ENCODE measurements at regions of chr19 and their contacts with region 1.

Region 1: DNA sequence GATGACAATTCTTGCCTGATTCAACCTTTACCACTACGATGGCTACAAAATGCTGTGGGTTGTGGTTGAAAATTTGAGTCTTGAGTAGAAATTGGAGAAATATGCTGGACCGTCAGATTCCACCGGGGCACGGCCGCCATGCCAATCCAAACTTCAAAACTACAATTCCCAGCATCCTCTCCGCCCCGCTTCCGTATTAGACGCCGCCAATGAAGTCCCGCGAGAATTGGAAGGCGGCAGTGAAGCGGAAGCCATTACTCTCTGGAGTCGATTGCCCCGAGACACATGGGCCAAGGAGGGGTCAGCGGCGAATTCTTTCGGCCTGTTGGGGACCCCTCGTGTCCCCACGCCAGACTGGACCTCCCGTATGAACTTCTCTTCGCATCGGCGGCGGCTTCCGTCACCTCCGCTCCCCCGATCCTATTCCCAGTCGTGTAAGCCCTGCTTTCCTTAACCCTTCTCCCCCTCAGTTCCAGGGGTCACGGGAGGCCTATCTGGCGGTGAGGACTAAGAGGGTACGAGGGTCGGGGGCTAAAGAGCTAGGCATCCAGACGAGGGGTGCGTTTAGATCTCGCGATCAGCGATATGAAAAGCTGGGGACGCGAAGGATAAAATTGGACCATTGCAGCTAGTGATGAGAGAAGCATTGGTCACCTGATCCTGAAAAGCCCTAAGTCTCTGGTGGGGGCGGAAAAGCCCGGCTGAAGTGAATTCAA is at the start of gene ZNF317:
- DNase-seq: peak; percentile 95
- H3K4me3 Mint-ChIP-seq: peak within 1 kb of the TSS; percentile 98
- H3K27ac Mint-ChIP-seq: peak within 1 kb of the TSS; percentile 96
- H3K4me1 Mint-ChIP-seq: peaks cover 36% of the 10 kb centered on the region
- H3K27me3 Mint-ChIP-seq: no peaks in the 10 kb centered on the region
- total RNA-seq, gene ZNF317: 38.9 to 39.7 TPM

Region 2: GRCh38 chr19:8832132-8833021 is 307.9 kb before region 1 on chr19 and contains the starts of genes MBD3L1 and ZNF558:
- CTCF ChIA-PET with region 1: no interaction called
- intact Hi-C with region 1: loop called (anchors 5 kb)
- DNase-seq: peak; percentile 100
- H3K4me3 Mint-ChIP-seq: peak within 1 kb of the TSS; percentile 82
- H3K27ac Mint-ChIP-seq: peak within 1 kb of the TSS; percentile 86
- H3K4me1 Mint-ChIP-seq: peaks cover 19% of the 10 kb centered on the region
- H3K27me3 Mint-ChIP-seq: no peaks in the 10 kb centered on the region
- total RNA-seq, gene MBD3L1: not detected
- total RNA-seq, gene ZNF558: 23.9 to 24.4 TPM

Region 3: GRCh38 chr19:9171393-9171991 is 31.2 kb after region 1 on chr19:
- CTCF ChIA-PET with region 1: no interaction called
- intact Hi-C with region 1: no loop called
- DNase-seq: no peak
- H3K4me3 Mint-ChIP-seq: no peak overlapping the region
- H3K27ac Mint-ChIP-seq: no peak overlapping the region
- H3K4me1 Mint-ChIP-seq: no peaks in the 10 kb centered on the region
- H3K27me3 Mint-ChIP-seq: no peaks in the 10 kb centered on the region

Region 4: DNA sequence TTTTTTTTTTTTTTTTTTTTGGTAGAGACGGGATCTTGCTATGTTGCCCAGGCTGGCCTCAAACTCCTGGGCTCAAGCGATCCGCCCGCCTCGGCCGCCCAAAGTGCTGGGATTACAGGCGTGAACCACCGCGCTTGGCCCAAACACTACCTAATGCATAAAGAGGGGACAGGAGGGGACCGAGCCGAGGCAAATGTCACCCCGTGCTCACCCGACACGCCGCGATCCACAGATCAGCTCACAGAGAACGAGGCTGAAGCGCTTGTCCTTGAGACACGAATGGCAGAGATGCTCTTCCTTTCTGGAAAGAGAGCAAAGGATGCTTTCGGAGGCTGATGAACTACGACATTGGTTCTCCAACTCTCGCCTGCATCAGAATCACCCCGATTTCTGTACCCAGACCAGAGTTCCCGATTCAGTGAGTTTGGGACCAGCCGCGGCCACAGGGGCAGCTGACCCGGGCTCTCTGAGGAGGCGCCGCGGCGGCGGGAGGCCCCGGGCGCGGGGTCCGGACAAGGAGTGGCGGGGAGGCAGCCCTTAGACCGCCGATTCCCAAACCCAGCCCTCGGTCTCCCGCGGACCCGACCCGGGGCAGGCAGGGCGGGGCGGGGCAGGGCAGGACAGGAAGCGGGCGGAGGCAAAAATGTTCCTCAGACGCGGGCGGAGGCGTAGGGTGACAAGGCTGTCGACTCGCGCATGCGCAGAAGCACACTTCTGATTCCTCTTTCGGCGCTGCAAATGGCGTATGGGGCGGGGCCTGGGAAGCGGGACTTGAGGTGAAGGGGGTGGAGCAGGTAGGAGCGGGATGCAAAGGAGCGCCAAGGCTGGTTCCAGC is 169.0 kb after region 1 on chr19 and contains the start of gene ZNF699:
- CTCF ChIA-PET with region 1: no interaction called
- intact Hi-C with region 1: loop called (anchors 1 kb)
- DNase-seq: peak; percentile 99
- H3K4me3 Mint-ChIP-seq: peak within 1 kb of the TSS; percentile 86
- H3K27ac Mint-ChIP-seq: peak within 1 kb of the TSS; percentile 97
- H3K4me1 Mint-ChIP-seq: peaks cover 12% of the 10 kb centered on the region
- H3K27me3 Mint-ChIP-seq: peaks cover 2% of the 10 kb centered on the region
- total RNA-seq, gene ZNF699: 4.6 to 6.4 TPM

Region 5: DNA sequence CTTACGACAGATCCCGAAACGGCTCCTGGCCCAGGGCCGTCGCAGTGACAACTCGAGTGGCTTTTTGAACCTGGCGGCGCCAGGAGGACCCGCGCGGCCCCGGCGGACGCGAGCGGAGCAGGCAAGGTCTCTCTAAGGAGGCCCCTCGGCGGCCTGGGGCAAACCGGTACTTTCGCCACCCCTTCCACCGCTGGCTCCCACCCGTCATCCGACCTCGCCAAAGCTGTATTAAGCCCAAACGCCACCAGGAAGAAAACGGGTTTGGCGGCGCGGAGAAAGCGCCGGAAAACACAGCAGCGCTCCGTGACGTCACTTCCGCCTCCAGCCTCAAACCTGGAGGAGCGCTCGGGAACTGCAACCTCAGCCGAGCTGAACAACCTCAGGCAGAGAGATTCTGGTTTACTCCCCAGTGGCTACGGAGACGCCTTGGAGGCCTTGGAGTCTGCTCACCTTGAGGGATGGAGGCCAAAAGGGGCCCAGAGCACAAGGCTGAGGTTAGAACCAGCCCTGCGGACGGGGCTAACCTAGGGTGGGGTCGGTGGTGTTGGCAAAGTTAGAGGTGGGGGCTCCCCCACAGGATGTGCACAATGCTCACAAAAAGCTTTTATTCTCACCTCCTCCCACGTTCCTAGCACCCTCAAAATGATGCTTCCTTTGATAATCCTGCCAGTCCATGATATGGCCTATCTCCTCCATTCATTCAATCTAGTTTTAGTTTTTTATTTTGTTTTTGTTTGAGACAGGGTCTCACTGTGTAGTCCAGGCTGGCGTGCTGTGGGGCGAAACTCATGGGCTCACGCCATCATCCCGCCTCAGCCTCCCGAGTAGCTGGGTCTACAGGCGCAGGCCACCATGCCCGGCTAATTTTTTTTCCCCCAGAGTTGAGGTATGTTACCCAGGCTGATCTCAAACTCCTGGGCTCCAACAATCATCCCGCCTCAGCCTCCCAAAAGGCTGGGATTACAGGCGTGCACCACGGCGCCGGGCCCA is 295.3 kb after region 1 on chr19 and contains the start of gene ZNF266:
- CTCF ChIA-PET with region 1: interaction called, 3 read pairs
- intact Hi-C with region 1: loop called (anchors 1 kb)
- DNase-seq: peak; percentile 96
- H3K4me3 Mint-ChIP-seq: peak within 1 kb of the TSS; percentile 90
- H3K27ac Mint-ChIP-seq: peak within 1 kb of the TSS; percentile 99
- H3K4me1 Mint-ChIP-seq: peaks cover 20% of the 10 kb centered on the region
- H3K27me3 Mint-ChIP-seq: no peaks in the 10 kb centered on the region
- total RNA-seq, gene ZNF266: 19.7 to 21.9 TPM

Region 6: DNA sequence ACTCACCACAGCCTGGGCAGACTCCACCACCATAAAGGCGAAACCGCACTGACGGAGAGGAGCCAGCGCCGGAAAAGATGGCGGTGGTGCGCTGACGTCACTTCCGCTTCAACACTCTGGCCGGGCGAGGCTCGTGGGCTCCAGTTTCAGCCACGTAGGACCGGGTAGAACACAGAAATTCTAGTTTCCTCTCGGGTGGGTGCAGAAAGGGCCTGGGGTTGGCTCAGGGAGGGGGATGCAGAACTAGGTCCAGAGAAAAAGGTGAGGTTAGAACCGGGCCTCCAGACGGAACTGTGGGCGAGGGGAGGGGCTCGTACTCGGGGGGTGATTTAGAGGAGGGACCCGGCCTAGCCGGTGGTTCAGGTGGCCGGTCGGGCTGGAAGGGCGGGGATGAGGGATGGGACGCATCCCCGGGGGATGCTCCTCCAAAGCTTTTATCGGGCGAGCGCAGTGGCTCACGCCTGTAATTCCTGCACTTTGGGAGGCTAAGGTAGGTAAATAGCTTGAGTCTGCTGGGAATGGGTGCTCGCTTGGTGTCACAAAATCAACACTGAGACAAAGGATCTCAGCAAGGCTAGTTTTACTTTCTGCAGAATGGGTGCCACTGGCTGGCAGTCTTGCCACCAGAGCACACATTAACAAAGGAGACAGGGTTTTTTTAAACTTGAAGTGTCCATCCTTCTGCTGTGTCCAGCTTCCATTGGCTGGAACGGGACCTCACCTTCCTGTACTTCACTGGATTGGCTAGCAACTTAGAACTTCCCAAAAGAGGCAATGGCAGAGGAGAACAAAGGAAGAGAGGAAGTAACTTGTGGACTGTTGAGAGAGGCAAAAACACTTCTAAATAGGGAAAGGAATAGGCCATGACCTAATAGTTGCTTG is 481.1 kb after region 1 on chr19 and contains the start of gene ZNF561:
- CTCF ChIA-PET with region 1: no interaction called
- intact Hi-C with region 1: loop called (anchors 1 kb)
- DNase-seq: peak; percentile 90
- H3K4me3 Mint-ChIP-seq: peak within 1 kb of the TSS; percentile 98
- H3K27ac Mint-ChIP-seq: peak within 1 kb of the TSS; percentile 99
- H3K4me1 Mint-ChIP-seq: peaks cover 18% of the 10 kb centered on the region
- H3K27me3 Mint-ChIP-seq: no peaks in the 10 kb centered on the region
- total RNA-seq, gene ZNF561: 28.7 to 29.4 TPM

Region 7: GRCh38 chr19:9796113-9796773 is 655.9 kb after region 1 on chr19:
- CTCF ChIA-PET with region 1: no interaction called
- intact Hi-C with region 1: loop called (anchors 1 kb)
- DNase-seq: peak; percentile 96
- H3K4me3 Mint-ChIP-seq: no peak overlapping the region
- H3K27ac Mint-ChIP-seq: peak overlapping the region; percentile 63
- H3K4me1 Mint-ChIP-seq: peaks cover 12% of the 10 kb centered on the region
- H3K27me3 Mint-ChIP-seq: no peaks in the 10 kb centered on the region

Region 8: GRCh38 chr19:9847087-9847671 is 706.9 kb after region 1 on chr19:
- CTCF ChIA-PET with region 1: no interaction called
- intact Hi-C with region 1: loop called (anchors 1 kb)
- DNase-seq: peak; percentile 60
- H3K4me3 Mint-ChIP-seq: no peak overlapping the region
- H3K27ac Mint-ChIP-seq: no peak overlapping the region
- H3K4me1 Mint-ChIP-seq: peaks cover 15% of the 10 kb centered on the region
- H3K27me3 Mint-ChIP-seq: no peaks in the 10 kb centered on the region